ENCODE measurements at regions of chr10 and their contacts with region 1.

Region 1: DNA sequence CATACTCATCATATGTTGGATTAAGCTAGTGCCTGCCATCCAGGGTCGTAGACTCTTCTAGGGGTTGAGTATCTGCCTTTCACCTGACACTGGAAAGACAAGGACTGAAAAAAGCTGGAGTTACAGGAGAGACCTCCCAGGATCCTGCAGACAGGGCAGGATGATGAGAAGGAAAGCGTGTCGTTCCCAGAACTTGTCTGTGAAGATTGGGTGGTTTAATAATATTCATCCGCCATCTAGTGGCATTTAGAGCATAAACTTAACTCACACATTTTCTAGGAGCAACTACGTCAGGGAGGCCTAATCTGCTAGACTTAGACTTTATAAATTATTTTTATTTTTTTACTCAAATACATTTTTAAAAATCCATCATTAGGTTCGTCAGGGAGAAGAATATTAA is 59.6 kb downstream of the ADRB1 start:
- DNase-seq: no peak
- H3K4me3 Mint-ChIP-seq: no peak overlapping the region
- H3K27ac Mint-ChIP-seq: no peak overlapping the region
- H3K4me1 Mint-ChIP-seq: peaks cover 18% of the 10 kb centered on the region
- H3K27me3 Mint-ChIP-seq: peaks cover 31% of the 10 kb centered on the region

Region 2: GRCh38 chr10:113735921-113736320 is 367.4 kb before region 1 on chr10:
- CTCF ChIA-PET with region 1: no interaction called
- intact Hi-C with region 1: loop called (anchors 1 kb)
- DNase-seq: peak; percentile 24
- H3K4me3 Mint-ChIP-seq: no peak overlapping the region
- H3K27ac Mint-ChIP-seq: no peak overlapping the region
- H3K4me1 Mint-ChIP-seq: no peaks in the 10 kb centered on the region
- H3K27me3 Mint-ChIP-seq: peaks cover 3% of the 10 kb centered on the region

Region 3: GRCh38 chr10:113802997-113803396 is 300.3 kb before region 1 on chr10:
- CTCF ChIA-PET with region 1: interaction called, 68 read pairs
- intact Hi-C with region 1: loop called (anchors 1 kb)
- DNase-seq: no peak
- H3K4me3 Mint-ChIP-seq: no peak overlapping the region
- H3K27ac Mint-ChIP-seq: no peak overlapping the region
- H3K4me1 Mint-ChIP-seq: no peaks in the 10 kb centered on the region
- H3K27me3 Mint-ChIP-seq: peaks cover 10% of the 10 kb centered on the region